ENCODE measurements at regions of chr2 and their contacts with region 1.

Region 1: DNA sequence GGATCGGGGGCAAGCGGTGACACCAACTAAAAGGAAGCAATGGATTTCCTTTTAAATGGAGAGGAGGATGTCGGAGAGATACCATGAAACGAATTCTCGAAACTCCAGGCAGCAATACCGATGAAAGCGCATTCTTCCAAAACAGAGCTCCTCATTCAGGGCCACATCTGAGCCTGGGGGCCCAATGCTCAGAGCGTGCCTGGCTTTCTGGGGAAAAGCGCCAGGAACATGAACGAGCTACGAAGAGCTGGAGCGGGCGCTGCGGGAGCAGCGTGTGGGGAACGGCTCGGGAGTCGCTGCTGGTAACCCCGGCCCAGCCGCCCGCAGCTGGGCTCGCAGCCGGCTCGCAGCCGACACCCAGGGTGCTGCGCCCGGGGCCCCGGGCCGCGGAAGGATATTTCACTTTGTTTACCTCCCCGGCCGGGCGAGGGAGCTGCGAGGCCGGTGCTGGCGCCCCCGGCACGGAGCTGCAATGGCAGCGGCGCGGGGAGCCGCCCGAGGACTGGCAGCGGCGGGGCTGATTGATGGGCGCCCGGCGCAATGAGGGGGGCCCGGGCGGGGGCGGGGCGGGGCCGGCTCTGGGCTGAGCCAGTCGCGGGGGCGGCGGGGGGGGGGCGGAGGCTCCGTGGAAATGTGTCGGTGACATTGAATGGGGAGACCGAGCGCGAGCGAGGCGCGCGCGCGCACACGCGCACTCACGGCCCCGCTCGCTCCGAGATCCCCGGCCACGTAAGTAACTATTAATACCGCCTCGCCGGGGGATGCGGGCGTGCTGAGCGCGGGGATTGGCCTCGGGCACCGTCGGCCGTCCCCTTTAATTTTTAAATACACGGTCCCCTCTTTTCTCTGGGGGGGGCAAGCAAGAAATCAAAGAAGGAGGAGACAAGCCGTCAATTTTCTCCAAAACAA is at the start of gene TRIB2:
- DNase-seq: peak; percentile 83
- H3K4me3 Mint-ChIP-seq: peak within 1 kb of the TSS; percentile 97
- H3K27ac Mint-ChIP-seq: peak within 1 kb of the TSS; percentile 78
- H3K4me1 Mint-ChIP-seq: peaks cover 45% of the 10 kb centered on the region
- H3K27me3 Mint-ChIP-seq: peaks cover 17% of the 10 kb centered on the region
- total RNA-seq, gene TRIB2: 3.9 TPM in 2 replicates

Region 2: DNA sequence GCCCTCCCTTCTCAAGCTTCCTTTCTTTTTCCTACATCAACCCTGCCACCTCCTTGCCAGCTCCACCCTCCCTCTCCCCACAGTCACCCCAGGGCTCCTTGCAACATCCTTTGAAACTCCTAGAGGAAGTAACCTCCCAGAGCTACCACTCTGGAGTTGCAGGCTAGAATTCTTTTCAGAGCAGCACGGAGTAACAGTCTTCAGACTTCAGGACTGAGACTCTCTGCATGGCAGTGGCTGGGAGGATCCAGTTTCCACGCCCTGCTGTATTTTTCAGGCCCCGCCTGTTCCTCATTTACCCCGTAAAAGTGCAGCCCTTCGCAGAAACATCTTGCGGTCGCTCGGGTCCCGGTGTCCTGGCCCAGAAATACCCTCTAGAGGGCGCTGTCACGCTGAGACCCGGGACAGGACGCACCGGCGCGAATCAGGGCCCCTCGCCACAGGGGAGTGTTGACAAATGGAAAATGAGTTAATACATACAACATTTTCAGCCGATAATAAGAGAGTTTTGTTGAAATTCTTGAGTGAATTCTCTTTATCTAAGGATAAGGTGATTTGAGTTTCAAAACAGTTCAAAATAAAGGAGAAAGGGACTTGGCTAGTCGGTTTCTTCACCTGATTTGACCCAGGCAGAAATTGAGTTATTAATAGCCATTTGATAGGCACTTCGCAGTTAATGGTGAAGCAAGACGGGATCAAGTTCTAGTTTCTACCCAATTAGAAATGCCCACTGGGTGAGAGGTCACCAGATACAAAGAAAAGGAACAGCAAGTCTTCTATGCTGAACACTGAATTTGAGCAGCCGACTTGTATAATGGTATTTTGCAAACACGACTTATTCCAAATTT is 1028.1 kb before region 1 on chr2:
- intact Hi-C with region 1: loop called (anchors 5 kb)
- DNase-seq: peak; percentile 82
- H3K4me3 Mint-ChIP-seq: peak overlapping the region; percentile 51
- H3K27ac Mint-ChIP-seq: peak overlapping the region; percentile 59
- H3K4me1 Mint-ChIP-seq: peaks cover 16% of the 10 kb centered on the region
- H3K27me3 Mint-ChIP-seq: peaks cover 13% of the 10 kb centered on the region

Region 3: GRCh38 chr2:12176623-12177454 is 539.7 kb before region 1 on chr2:
- intact Hi-C with region 1: loop called (anchors 5 kb)
- DNase-seq: no peak
- H3K4me3 Mint-ChIP-seq: no peak overlapping the region
- H3K27ac Mint-ChIP-seq: no peak overlapping the region
- H3K4me1 Mint-ChIP-seq: peaks cover 24% of the 10 kb centered on the region
- H3K27me3 Mint-ChIP-seq: peaks cover 14% of the 10 kb centered on the region

Region 4: DNA sequence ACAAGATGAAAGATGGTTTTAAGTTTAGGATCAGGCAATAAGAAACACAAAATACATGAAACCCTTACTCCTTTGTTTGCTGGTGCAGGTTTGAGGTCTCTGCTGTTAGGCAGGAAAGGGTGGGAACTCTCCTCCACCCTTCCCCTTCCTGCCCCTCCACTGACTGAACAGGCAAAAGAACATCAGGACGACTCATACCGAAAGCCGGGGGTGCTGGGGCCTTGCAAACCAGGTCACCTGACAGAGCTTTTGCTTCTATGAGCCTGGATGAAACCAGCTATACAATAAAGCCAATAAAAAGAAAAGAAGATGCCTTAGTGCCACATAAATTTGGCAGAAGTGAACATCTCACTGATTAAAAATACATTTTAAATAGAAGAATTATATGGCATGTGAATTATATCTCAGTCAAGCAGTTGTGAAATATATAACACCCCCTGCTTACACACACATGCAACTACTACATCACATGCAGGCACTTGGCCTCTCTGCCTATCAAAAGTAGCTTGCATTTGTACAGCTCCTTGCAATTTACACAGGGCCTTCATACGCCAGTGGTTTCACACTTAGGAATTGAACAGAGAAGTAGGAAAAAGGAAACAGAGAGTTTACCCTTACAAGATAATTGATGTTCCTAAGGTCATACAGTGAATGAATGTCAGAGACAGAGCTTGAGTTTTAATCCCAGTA is 214.9 kb before region 1 on chr2:
- intact Hi-C with region 1: loop called (anchors 1 kb)
- DNase-seq: peak; percentile 82
- H3K4me3 Mint-ChIP-seq: peak overlapping the region; percentile 34
- H3K27ac Mint-ChIP-seq: peak overlapping the region; percentile 76
- H3K4me1 Mint-ChIP-seq: peaks cover 87% of the 10 kb centered on the region
- H3K27me3 Mint-ChIP-seq: no peaks in the 10 kb centered on the region

Region 5: DNA sequence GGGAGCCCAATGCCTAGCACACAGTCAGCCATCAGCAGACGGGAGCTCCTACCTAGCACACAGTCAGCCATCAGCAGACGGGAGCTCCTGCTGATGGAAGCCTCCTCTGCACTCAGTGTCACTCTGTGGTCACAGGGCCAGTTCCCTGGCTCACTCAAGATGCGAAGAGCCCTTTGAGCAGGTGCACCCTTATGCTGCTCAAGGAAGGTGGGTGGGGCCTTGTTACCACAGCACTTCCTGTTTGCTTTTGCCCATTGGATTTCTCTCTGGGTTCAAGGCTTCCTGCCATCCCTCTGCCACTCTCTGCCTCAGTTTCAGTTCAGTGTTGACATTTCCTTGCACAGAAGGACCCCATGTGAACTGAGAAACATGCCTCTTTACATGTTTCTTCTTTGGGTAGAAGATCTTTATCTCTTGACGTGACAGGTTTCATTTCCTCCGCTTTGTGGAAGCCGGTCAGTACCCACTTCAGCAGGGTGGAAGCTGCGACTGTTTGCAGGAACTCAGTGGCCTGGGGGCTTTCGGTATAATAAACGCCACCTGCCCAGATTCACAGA is 11.8 kb after region 1 on chr2:
- intact Hi-C with region 1: loop called (anchors 1 kb)
- DNase-seq: peak; percentile 75
- H3K4me3 Mint-ChIP-seq: peak overlapping the region; percentile 45
- H3K27ac Mint-ChIP-seq: peak overlapping the region; percentile 25
- H3K4me1 Mint-ChIP-seq: peaks cover 56% of the 10 kb centered on the region
- H3K27me3 Mint-ChIP-seq: no peaks in the 10 kb centered on the region

Region 6: DNA sequence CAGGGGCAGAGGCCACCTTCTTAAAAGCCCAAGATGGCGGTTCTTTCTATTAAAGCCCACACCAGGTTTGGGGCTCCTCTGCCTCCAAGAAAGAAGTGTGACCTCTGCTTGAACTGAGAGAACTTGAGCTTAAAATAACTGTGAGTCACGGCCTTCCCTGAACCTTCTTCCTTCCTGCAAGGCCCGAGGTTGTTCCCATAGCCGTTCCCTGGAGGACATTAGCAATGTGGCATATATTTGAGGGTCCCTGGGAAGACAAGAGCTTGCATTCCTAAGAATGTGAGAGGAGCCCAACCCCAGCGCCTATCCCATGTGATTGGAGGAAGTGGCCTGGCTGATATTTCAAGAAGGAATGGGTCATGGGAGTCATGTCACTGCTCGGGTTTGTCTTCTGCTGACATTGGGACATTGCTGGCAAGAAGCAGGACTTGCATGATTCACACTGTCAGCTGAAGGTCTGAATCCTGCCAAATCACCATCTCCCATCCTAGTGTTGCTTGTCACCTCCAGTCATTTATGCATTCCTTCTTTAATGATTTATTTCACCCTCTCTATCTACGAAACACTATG is 168.3 kb after region 1 on chr2:
- intact Hi-C with region 1: no loop called
- DNase-seq: no peak
- H3K4me3 Mint-ChIP-seq: no peak overlapping the region
- H3K27ac Mint-ChIP-seq: no peak overlapping the region
- H3K4me1 Mint-ChIP-seq: no peaks in the 10 kb centered on the region
- H3K27me3 Mint-ChIP-seq: peaks cover 18% of the 10 kb centered on the region

Region 7: GRCh38 chr2:13006829-13007717 is 290.5 kb after region 1 on chr2:
- intact Hi-C with region 1: loop called (anchors 2 kb)
- DNase-seq: peak; percentile 40
- H3K4me3 Mint-ChIP-seq: no peak overlapping the region
- H3K27ac Mint-ChIP-seq: no peak overlapping the region
- H3K4me1 Mint-ChIP-seq: peaks cover 3% of the 10 kb centered on the region
- H3K27me3 Mint-ChIP-seq: peaks cover 48% of the 10 kb centered on the region